Heart right ventricle (tissue), 16 donors: ENCODE measurements at regions of chr11 and their contacts with region 1.

Region 1: DNA sequence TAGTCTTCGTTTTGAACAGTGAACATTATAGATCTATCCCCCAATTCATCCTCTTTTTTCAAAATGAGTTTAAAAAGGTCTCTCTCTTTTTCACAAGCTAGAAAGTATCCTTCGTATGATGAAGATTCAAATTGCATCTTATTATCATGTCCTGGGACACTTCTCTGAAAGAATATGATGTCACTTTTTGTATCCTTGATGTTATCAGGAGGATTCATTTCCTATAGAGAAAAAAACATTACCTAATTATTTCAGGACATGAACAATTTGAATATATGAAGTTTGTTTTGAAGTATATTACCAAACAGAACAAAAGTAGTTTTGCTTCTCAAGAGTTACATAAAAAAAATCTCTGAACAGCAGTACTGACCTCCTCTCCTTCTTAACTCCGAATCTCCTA is 20.3 kb downstream of the IL18 start:
- DNase-seq: no peak
- ATAC-seq: no peak
- H3K4me3 ChIP-seq: no peak overlapping the region
- H3K27ac ChIP-seq: no peak overlapping the region
- H3K4me1 ChIP-seq: peaks cover 0 to 6% (median 0%) of the 10 kb centered on the region in 9 donors
- H3K27me3 ChIP-seq: no peaks in the 10 kb centered on the region
- CTCF ChIP-seq: no peak

Region 2: DNA sequence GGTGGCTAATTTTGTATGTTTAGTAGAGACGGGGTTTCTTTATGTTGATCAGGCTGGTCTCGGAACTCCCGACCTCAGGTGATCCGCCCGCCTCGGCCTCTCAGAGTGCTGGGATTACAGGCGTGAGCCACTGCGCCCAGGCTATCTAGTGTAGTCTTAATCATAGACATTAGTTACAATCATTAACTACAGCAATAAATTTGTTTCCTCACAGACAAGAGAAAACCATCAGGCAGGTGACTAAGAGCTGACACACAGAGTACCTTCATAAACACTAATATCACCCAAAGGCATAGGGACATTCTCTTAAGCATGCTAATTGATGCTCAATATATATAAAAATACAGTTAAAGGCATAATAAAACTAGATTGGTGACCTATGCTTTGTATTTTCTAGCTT is 37.5 kb before region 1 on chr11:
- intact Hi-C with region 1: no loop called
- DNase-seq: no peak
- ATAC-seq: no peak
- H3K4me3 ChIP-seq: no peak overlapping the region
- H3K27ac ChIP-seq: no peak overlapping the region
- H3K4me1 ChIP-seq: peaks cover 0 to 5% (median 0%) of the 10 kb centered on the region in 9 donors
- H3K27me3 ChIP-seq: no peaks in the 10 kb centered on the region
- CTCF ChIP-seq: no peak

Region 3: GRCh38 chr11:112163875-112164685 is 20.5 kb after region 1 on chr11 and contains the start of gene IL18:
- intact Hi-C with region 1: loop called in 1 of 10 experiments (anchors 1 kb)
- DNase-seq: peak in 1 of 2 donors; percentile 19
- ATAC-seq: peak in 5 of 8 donors; percentile 50 to 60 (median 56)
- H3K4me3 ChIP-seq: peak within 1 kb of the TSS in 4 of 10 donors; percentile 4 to 51 (median 17)
- H3K27ac ChIP-seq: peak within 1 kb of the TSS in 1 of 10 donors; percentile 78
- H3K4me1 ChIP-seq: peaks cover 0 to 42% (median 0%) of the 10 kb centered on the region in 9 donors
- H3K27me3 ChIP-seq: no peaks in the 10 kb centered on the region
- CTCF ChIP-seq: no peak
- total RNA-seq, gene IL18: 0.28 to 5.7 (median 1.0) TPM